ENCODE measurements at regions of chr17 and their contacts with region 1.

Region 1: GRCh38 chr17:72592242-72592966 is 471.6 kb downstream of the SOX9 start:
- DNase-seq: peak; percentile 58 to 90
- H3K4me3 ChIP-seq: peak overlapping the region; percentile 56 to 74 (median 70)
- H3K27ac ChIP-seq: no peak overlapping the region
- H3K4me1 ChIP-seq: peaks cover 9 to 28% (median 12%) of the 10 kb centered on the region in 4 experiments
- H3K27me3 ChIP-seq: peaks cover 8 to 29% (median 22%) of the 10 kb centered on the region in 4 experiments
- CTCF ChIP-seq: no peak
- EP300 ChIP-seq: no peak
- POLR2A ChIP-seq: peak; percentile 99
- RAD21 ChIP-seq: no peak

Region 2: GRCh38 chr17:72487731-72488494 is 104.5 kb before region 1 on chr17:
- CTCF ChIA-PET with region 1: no interaction called
- POLR2A ChIA-PET with region 1: no interaction called
- DNase-seq: no peak
- H3K4me3 ChIP-seq: no peak overlapping the region
- H3K27ac ChIP-seq: no peak overlapping the region
- H3K4me1 ChIP-seq: no peaks in the 10 kb centered on the region; a peak in 1 of 7 replicates
- H3K27me3 ChIP-seq: no peaks in the 10 kb centered on the region
- CTCF ChIP-seq: no peak
- EP300 ChIP-seq: no peak
- POLR2A ChIP-seq: no peak
- RAD21 ChIP-seq: no peak

Region 3: GRCh38 chr17:72498364-72499210 is 93.8 kb before region 1 on chr17:
- CTCF ChIA-PET with region 1: no interaction called
- POLR2A ChIA-PET with region 1: no interaction called
- DNase-seq: no peak
- H3K4me3 ChIP-seq: no peak overlapping the region
- H3K27ac ChIP-seq: no peak overlapping the region
- H3K4me1 ChIP-seq: peaks cover 0 to 11% (median 5%) of the 10 kb centered on the region in 4 experiments; a peak in 5 of 7 replicates
- H3K27me3 ChIP-seq: no peaks in the 10 kb centered on the region
- CTCF ChIP-seq: no peak
- EP300 ChIP-seq: no peak
- POLR2A ChIP-seq: no peak
- RAD21 ChIP-seq: no peak

Region 4: DNA sequence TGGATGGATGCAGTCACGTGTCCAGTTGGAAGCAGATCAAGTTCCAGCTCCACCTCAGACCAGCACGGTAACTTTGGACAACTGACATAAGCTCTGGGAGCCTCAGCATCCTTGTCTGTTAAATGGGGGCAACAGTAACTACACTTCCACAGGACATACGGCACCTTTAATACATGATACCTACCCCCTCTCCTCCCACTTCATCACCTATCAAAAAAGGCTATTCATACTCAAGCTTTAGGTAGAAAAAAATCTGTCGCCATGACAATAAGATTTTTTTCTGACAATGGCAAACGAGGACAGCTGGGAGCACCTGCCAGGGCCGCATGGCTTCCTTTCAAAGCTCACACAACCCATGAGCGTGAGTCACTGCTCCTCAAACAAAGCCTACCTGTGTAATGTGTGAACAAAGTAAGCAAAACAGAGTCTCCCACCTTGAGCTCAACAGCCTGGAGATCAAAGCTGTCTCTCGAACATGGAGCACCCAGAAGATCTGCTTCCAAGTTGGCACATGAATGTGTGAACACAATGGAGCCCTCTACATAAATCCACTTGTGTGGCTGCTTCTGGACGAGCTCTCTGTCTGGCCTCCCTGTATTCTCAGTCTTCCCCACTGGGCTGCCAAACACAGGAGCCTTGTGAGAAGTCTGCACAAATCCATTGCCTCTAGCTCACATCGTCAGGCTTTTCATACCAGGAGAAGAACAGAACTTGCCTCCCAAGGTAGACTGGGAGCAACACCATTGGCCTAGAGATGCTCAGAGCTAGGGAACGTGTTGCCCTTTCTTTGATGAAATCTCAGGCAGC is 11.9 kb before region 1 on chr17:
- CTCF ChIA-PET with region 1: interaction called, 10 read pairs
- POLR2A ChIA-PET with region 1: interaction called, 17 read pairs
- DNase-seq: no peak
- H3K4me3 ChIP-seq: no peak overlapping the region
- H3K27ac ChIP-seq: no peak overlapping the region
- H3K4me1 ChIP-seq: peaks cover 0 to 12% (median 6%) of the 10 kb centered on the region in 4 experiments; a peak in 5 of 7 replicates
- H3K27me3 ChIP-seq: no peaks in the 10 kb centered on the region
- CTCF ChIP-seq: no peak
- EP300 ChIP-seq: no peak
- POLR2A ChIP-seq: no peak
- RAD21 ChIP-seq: no peak

Region 5: GRCh38 chr17:72699545-72699944 is 107.1 kb after region 1 on chr17:
- CTCF ChIA-PET with region 1: no interaction called
- POLR2A ChIA-PET with region 1: no interaction called
- DNase-seq: no peak
- H3K4me3 ChIP-seq: no peak overlapping the region
- H3K27ac ChIP-seq: no peak overlapping the region
- H3K4me1 ChIP-seq: no peaks in the 10 kb centered on the region
- H3K27me3 ChIP-seq: no peaks in the 10 kb centered on the region; a peak in 1 of 7 replicates
- CTCF ChIP-seq: no peak
- EP300 ChIP-seq: no peak
- POLR2A ChIP-seq: no peak
- RAD21 ChIP-seq: no peak

Region 6: DNA sequence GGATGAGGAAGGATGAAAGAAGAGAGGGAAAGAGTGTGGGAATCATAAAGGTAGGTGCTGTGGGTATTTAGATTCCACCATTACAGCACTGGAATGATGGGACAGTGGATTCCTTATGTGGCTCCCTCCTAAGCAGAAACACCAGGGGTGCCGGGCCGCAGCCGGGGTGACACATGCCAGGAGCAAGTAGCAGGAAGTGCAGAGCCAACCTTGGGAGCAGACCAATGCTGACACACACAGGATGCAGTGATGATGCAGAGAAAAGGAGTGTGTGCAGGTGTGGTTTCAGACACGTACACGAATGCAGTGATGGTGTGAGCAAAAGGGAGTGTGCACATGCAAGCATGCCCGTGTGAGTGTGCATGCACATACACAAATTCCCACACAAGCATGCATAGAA is 162.1 kb after region 1 on chr17:
- CTCF ChIA-PET with region 1: no interaction called
- POLR2A ChIA-PET with region 1: no interaction called
- DNase-seq: no peak
- H3K4me3 ChIP-seq: no peak overlapping the region
- H3K27ac ChIP-seq: no peak overlapping the region
- H3K4me1 ChIP-seq: no peaks in the 10 kb centered on the region
- H3K27me3 ChIP-seq: no peaks in the 10 kb centered on the region
- CTCF ChIP-seq: no peak
- EP300 ChIP-seq: no peak
- POLR2A ChIP-seq: no peak
- RAD21 ChIP-seq: no peak

Measured in H1 (cell line).